ENCODE measurements at regions of chr12 and their contacts with region 1.

Region 1: DNA sequence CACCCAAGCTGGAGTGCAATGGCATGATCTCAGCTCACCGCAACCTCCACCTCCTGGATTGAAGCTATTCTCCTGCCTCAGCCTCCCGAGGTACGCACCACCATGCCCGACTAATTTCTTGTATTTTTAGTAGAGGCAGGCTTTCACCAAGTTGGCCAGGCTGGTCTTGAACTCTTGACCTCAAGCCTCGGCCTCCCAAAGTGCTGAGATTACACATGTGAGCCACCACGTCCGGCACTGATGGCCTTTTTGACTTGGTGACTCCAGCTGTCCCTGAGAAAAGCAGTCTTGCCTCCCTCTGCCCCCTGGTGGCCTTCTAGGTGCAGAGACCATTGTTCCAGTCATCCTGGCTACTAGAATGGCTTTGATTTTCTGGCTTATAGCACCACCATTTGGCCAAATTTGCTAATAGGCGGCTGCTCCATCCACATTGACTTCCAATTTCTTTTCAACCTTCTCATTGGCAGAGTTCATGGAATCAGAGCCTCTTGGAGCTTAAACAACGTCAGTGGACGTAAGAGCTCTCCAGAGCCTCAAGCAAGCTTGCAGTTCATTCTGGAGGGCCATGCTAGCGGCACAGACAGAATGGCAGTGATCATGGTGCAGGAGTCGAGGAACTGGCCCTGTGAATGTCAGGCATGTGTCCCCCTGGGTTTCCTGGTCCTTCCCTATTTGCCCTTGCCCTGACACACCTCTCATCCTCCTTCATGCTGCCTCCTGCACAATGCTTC is 25.4 kb upstream of the EIF4B start:
- H3K4me3 ChIP-seq: no peak overlapping the region
- H3K27ac ChIP-seq: no peak overlapping the region
- H3K4me1 ChIP-seq: no peaks in the 10 kb centered on the region
- CTCF ChIP-seq: peak; percentile 99

Region 2: GRCh38 chr12:52156736-52157565 is 823.9 kb before region 1 on chr12:
- CTCF ChIA-PET with region 1: interaction called, 13 read pairs
- POLR2A ChIA-PET with region 1: no interaction called
- H3K4me3 ChIP-seq: no peak overlapping the region
- H3K27ac ChIP-seq: no peak overlapping the region
- H3K4me1 ChIP-seq: no peaks in the 10 kb centered on the region
- CTCF ChIP-seq: peak; percentile 96

Region 3: GRCh38 chr12:52407918-52408317 is 572.9 kb before region 1 on chr12:
- CTCF ChIA-PET with region 1: no interaction called
- POLR2A ChIA-PET with region 1: no interaction called
- H3K4me3 ChIP-seq: no peak overlapping the region
- H3K27ac ChIP-seq: no peak overlapping the region
- H3K4me1 ChIP-seq: no peaks in the 10 kb centered on the region
- CTCF ChIP-seq: no peak

Region 4: DNA sequence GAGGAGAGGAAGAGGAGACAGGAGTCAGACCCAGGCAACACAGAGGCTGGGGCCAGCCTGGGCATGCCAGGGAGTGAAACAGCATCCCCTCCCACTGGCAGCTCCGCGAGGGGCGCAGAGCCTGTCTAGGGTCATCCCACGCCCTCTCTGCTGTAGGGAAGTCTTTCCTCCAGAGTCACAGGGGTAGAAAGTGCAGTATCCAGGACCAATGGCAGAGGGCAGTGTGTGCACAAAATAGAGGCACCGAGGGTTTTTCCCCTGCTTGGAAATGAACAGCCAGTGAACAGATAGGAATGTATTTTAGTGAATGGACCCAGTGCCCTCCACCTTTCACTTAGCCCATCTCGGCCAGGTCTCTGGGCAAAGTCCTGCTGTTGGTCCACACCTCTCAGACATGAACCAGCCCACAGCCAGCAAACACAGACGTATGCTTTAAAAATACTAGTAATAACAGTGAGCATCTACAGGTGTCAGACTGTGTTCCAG is 397.8 kb before region 1 on chr12:
- CTCF ChIA-PET with region 1: interaction called, 10 read pairs
- POLR2A ChIA-PET with region 1: no interaction called
- H3K4me3 ChIP-seq: no peak overlapping the region
- H3K27ac ChIP-seq: no peak overlapping the region
- H3K4me1 ChIP-seq: no peaks in the 10 kb centered on the region
- CTCF ChIP-seq: peak; percentile 68

Region 5: DNA sequence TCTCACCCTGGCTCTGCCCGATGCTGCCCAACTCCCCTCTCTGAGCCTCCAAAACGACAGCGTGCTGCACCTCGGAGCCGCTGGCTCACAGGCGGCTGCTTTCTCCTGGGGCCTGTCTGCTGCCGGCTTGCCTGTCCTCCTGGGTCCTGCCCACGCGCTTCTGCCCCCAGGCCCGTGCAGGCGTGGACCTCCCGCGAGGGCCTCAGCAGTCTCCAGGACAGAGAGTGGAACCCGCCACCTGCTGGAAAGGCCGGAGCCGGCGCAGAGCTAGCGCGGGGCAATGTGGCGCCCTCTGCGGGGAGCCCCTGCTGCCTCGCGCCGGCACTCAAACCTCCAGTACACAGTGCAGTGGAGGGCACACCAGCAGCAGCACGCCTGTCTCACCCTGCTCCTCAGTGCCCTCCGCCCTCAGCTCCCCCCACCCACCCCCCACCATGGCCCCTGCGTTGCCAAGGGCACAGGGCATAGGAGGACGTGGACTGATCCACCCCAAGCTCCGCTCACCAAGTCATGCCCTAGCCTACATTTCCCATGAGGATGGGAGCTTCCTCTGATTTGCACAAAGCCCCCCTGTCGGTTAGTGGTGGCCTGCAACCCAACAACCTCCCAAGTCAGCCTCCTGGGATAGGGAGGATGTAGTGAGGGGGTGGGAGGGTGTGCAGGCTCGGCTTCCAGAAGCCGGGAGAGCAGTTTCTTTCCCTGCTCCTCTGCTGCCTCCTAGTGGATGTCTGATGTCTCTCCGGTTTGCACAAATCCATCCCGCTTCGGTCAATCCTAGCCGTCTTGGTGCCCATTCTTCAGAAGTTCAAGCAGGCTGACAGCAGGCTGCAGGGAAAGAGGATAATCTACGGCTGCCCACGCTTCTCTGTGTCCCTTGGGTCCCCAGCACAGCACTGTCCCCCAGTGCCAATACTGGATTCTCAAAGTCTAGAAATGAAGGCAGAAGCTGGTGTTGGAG is 101.2 kb before region 1 on chr12:
- CTCF ChIA-PET with region 1: interaction called, 835 read pairs
- POLR2A ChIA-PET with region 1: interaction called, 28 read pairs
- H3K4me3 ChIP-seq: no peak overlapping the region
- H3K27ac ChIP-seq: peak overlapping the region; percentile 52; the same call in 1 of the 2 replicates
- H3K4me1 ChIP-seq: peaks cover under 1% of the 10 kb centered on the region
- CTCF ChIP-seq: peak; percentile 98

Region 6: DNA sequence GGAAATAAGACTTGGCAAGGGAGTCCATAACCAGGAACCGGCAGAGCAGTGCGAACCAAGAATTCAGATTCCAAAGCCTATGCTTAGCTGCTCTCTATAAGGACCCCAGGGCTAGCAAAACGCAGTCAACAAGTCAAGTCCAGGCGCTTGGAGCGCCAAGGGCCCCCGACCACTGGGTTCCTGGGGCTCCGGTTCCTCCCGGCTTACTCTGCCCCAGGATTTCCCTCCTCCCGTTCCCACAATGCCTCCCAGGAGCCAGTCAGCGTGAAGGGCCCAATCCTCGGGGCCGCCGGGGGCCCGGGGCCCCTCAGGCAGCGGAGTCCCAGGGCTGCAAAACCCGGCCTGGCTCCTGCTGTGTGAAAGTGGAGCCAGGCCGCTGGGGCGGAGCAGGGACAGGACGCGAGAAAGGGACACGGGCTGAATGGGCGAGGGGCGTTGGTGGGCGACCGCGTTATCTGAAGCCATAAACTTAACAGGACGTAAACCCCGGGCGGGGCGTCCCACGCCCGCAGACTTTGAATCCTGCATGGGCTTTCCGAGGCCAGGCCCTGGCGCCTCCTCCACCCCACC is 77.5 kb before region 1 on chr12:
- CTCF ChIA-PET with region 1: interaction called, 316 read pairs
- POLR2A ChIA-PET with region 1: interaction called, 115 read pairs
- H3K4me3 ChIP-seq: peak overlapping the region; percentile 68
- H3K27ac ChIP-seq: peak overlapping the region; percentile 54
- H3K4me1 ChIP-seq: peaks cover 18% of the 10 kb centered on the region
- CTCF ChIP-seq: no peak

Region 7: DNA sequence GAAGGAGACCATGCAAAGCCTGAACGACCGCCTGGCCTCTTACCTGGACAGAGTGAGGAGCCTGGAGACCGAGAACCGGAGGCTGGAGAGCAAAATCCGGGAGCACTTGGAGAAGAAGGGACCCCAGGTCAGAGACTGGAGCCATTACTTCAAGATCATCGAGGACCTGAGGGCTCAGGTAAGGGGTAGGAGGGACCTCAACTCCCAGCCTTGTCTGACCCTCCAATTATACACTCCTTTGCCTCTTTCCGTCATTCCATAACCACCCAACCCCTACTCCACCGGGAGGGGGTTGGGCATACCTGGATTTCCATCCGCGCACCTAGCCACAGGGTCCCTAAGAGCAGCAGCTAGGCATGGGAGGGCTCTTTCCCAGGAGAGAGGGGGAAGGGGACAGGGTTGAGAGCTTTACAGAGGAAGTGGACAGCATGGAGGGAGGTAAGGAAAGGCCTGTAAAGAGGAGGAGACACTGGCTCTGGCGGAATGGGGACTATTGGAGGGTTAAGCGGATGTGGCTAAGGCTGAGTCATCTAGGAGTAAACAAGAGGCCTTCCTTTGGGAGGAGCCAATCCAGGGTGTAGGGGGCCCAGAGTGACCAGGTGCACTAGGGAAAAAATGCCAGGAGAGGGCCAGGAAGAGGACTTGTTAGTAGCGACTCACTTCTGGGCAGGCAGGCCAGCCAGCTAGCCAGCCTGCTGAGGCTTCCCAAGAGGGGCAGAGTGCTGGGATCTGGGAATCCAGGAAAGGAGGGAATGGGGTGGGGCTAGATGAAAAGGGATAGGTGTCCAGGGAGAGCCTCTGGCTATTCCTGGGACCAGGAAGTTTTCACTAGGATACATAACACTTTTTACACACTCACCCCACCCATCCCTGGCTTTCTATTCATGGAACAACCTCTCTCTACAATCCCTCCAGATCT is 31.2 kb before region 1 on chr12:
- CTCF ChIA-PET with region 1: interaction called, 19 read pairs
- POLR2A ChIA-PET with region 1: interaction called, 7 read pairs
- H3K4me3 ChIP-seq: peak overlapping the region; percentile 65
- H3K27ac ChIP-seq: peak overlapping the region; percentile 82
- H3K4me1 ChIP-seq: peaks cover 7% of the 10 kb centered on the region; the same call in 1 of the 2 replicates
- CTCF ChIP-seq: peak; percentile 62; the same call in 1 of the 2 replicates

Region 8: DNA sequence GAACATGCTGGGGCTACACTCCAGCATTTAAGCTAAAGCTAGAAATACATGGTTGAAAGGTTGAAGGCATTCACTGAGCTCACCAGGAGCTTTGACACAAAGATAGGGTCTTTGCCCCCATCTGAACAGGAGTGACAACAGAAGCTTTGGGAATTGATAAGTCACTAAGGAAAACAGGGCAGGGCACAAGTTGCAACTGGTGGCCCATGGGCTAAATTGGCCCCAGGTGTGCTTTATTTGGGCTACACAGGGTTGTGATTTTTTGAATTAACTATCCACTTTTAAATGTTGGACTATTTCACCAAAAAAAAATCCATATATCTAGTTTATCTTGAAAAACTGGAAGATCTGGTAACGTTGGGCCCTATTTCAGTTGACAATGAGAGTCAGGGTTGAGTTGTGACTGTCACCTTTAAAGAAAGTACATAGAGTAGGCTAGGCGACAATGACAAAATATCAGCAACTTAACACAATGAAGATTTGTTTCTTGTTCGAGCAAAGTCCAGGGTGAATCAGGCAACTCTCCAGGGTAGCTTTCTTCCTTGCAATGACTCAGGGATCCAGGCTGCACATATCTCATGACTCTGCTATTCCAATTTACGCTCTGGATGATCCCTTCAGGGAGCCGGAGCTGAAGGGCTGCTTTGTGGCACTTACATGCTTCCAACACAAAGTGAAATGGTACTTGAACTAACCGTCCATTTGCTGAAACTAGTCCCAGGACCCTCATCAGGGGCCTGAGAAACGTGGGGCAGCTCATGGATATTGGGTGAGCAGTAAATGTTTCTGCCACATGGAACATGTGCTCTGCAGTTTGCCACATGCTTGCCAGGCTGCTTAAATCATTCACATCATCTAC is 12.1 kb after region 1 on chr12:
- CTCF ChIA-PET with region 1: interaction called, 27 read pairs
- POLR2A ChIA-PET with region 1: no interaction called
- H3K4me3 ChIP-seq: no peak overlapping the region
- H3K27ac ChIP-seq: no peak overlapping the region
- H3K4me1 ChIP-seq: no peaks in the 10 kb centered on the region; the same call in 1 of the 2 replicates
- CTCF ChIP-seq: no peak

Region 9: DNA sequence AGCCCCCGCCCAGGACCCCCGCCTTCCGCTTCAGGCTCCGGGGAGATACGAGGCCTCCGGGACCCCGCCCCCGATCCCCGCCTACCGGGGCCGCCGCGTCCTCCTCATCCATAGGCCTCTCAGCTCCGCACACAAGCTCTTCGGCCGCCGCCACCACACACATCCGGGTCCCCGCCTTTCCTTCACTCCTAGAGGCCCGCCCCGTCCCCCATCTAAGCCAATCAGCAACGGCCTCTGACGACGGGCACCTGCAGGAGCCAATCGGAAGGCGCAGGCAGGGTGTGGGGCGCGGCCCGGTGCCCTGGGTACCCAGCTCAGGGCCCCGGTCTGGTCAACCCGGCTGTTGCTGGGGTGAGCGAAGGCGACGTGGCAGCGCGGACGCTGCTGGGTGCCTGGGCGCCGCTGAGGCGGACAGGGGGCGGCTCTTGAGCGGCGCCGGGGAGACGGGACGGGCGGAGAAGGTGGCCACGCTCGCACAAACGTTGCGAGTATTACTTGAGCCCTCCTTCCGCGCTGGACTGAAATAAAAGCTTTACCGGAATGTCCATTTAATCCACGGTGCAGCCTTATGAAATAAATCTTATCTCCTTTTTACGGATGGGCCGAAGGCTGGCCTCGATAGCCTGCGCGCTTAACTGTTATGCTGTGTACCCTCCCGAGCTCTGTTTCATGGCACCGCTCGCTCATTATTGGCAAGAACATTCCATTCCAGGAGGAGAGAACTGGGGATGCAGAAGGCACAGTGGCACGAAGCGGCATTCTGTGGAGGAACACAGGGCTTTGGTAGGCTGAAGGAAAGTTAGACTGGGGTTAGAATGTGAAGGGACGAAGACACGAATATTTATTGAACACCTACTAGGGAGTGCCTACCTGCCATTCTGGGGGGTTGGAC is 98.6 kb after region 1 on chr12 and contains the start of gene SPRYD3:
- CTCF ChIA-PET with region 1: no interaction called
- POLR2A ChIA-PET with region 1: no interaction called
- H3K4me3 ChIP-seq: peak within 1 kb of the TSS; percentile 55
- H3K27ac ChIP-seq: peak within 1 kb of the TSS; percentile 85
- H3K4me1 ChIP-seq: peaks cover 2% of the 10 kb centered on the region; the same call in 1 of the 2 replicates
- CTCF ChIP-seq: no peak

Region 10: DNA sequence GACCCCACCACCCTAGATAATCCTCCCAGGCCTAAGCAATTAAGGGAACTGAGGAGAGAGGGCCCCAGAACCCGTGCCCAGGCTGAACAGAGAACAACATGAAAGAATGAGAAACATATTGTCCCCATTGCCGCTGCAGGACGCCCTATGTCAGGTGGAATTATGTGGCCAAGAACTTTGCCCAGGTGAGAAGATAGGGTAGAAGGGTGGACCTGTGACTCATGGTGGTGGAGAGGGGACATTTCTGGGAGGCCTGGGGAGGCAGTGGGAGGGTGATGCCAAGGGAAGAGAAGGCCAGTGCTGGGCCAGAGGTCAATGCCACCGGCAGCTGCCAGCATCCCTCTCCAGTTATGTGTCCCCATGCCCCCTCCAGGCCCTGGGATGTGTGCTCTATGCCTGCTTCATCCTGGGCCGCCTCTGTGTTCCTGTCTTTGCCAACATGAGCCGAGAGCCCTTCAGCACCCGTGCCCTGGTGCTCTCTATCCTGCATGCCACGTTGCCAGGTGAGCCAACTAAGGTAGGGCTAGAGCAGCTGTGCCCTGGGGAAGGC is 138.0 kb after region 1 on chr12:
- CTCF ChIA-PET with region 1: no interaction called
- POLR2A ChIA-PET with region 1: no interaction called
- H3K4me3 ChIP-seq: no peak overlapping the region
- H3K27ac ChIP-seq: no peak overlapping the region
- H3K4me1 ChIP-seq: no peaks in the 10 kb centered on the region
- CTCF ChIP-seq: no peak